ENCODE measurements at regions of chr18 and their contacts with region 1.

Region 1: GRCh38 chr18:9971313-9971920 is 57.6 kb downstream of the VAPA start:
- DNase-seq: peak; percentile 32
- ATAC-seq: peak; percentile 81
- H3K4me3 Mint-ChIP-seq: no peak overlapping the region
- H3K27ac Mint-ChIP-seq: no peak overlapping the region
- H3K4me1 Mint-ChIP-seq: peaks cover 14% of the 10 kb centered on the region
- H3K27me3 Mint-ChIP-seq: peaks cover 35% of the 10 kb centered on the region
- CTCF ChIP-seq: peak; percentile 36

Region 2: DNA sequence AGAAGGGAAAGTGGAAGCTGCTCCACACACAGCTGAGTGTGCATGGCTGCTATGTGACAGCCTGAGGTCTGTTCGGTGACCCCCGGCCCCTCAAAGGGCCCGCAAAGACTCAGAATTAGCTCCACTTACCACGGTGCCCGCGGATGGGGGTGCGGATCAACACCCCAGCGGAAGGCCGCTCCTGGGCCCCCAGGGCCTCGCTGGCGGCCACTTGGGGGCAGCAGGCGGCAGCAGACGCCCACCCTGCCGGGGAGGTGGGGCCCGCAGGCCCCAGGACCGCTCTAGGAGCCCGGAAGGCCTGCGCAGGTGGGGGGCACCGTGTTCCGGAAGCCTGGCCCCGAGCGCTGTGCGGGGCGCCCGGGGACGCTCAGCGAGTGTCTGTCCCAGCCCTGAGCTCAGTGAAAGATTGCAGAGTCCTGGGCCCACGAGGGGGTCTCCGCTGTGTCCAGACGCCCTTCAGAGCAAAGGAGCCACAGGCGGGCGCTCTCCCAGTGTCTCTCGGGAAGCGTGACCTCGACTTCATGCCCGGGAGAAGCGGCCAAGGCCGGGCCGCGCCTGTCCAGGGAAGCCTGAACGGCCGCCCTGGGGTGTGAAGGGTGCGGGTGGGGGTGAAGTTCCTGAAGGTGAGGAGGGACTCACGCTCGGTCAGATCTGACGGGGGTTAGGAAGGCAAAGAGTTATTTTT is 61.1 kb after region 1 on chr18:
- CTCF ChIA-PET with region 1: interaction called, 10 read pairs
- POLR2A ChIA-PET with region 1: no interaction called
- intact Hi-C with region 1: loop called (anchors 2 kb)
- DNase-seq: peak; percentile 52
- ATAC-seq: peak; percentile 94
- H3K4me3 Mint-ChIP-seq: peak overlapping the region; percentile 81
- H3K27ac Mint-ChIP-seq: peak overlapping the region; percentile 68
- H3K4me1 Mint-ChIP-seq: peaks cover 11% of the 10 kb centered on the region
- H3K27me3 Mint-ChIP-seq: no peaks in the 10 kb centered on the region
- CTCF ChIP-seq: no peak

Region 3: GRCh38 chr18:10519999-10520935 is 548.9 kb after region 1 on chr18:
- CTCF ChIA-PET with region 1: interaction called, 65 read pairs
- POLR2A ChIA-PET with region 1: no interaction called
- intact Hi-C with region 1: loop called (anchors 1 kb)
- DNase-seq: peak; percentile 37
- ATAC-seq: peak; percentile 94
- H3K4me3 Mint-ChIP-seq: no peak overlapping the region
- H3K27ac Mint-ChIP-seq: no peak overlapping the region
- H3K4me1 Mint-ChIP-seq: peaks cover 13% of the 10 kb centered on the region
- H3K27me3 Mint-ChIP-seq: peaks cover 12% of the 10 kb centered on the region
- CTCF ChIP-seq: no peak

Region 4: DNA sequence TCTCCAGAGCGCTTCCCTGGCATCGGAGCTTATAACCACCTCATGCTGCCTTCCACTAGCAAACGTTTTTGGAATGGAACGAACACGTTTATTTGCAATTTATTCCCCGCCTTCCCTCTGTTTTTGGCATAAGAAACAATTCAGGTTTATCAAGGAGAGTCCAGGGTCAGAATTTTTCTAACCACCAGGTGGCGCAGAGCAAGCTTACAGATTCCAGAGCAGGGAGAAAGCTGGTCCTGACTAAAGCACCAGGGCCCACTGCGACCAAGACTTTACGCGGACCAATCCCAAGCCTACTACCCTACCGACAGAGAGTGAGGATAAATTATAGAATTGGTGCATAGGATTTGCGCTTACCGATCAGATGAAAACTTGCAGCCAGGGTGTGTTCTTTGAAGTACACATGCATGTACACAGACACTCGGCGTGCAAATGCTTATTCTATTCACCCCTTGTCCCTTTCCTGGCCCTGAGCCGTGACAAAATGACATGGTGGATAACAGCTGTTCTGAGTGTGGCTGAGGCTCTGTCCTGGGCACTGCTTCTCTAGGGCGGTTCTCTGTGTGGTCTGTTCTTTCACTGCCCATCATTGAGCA is 589.1 kb after region 1 on chr18:
- CTCF ChIA-PET with region 1: interaction called, 3 read pairs
- POLR2A ChIA-PET with region 1: no interaction called
- intact Hi-C with region 1: loop called (anchors 1 kb)
- DNase-seq: peak; percentile 28
- ATAC-seq: peak; percentile 69
- H3K4me3 Mint-ChIP-seq: peak overlapping the region; percentile 67
- H3K27ac Mint-ChIP-seq: no peak overlapping the region
- H3K4me1 Mint-ChIP-seq: peaks cover 13% of the 10 kb centered on the region
- H3K27me3 Mint-ChIP-seq: no peaks in the 10 kb centered on the region
- CTCF ChIP-seq: peak; percentile 25

Region 5: DNA sequence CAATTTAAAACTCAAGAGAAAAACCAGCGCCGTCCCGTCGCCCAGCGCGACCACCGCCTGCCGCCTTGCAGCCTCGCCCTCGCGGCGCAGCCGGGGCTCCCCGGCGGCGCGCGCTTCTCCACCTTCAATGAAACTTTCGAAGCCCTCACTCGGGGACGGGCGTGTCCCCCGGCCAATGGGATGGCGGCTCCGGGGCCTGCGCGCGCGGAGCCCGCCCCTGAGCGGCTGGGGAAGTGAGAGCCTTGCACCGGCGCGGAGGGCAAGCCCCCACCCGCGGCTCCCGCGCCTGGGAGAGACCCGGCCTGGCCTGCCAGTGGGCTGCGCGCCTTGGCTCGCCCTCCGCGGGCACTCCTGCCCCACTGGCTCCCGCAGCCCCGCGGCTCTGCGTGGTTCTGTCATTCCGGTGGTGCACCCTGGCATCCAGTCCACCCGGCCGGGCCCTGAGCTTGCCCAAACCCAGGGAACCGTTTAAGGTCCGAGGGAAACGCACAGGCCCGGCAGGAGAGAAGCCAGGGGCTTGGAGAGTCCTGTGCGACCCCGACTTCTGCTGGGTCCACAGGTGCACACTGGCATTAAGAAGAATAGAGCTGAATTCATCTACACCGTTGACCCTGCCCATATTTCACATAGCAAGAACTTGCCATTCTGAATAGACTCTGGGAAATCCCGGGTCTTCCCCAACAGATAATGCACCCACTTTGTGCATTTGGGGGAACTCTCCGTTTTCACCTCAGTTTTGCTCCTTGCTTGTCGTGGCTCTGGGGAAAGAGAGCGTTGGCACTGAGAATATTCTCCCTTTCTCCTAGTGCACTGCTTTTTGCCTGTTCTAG is 1178.2 kb after region 1 on chr18 and contains the start of gene PIEZO2:
- CTCF ChIA-PET with region 1: no interaction called
- POLR2A ChIA-PET with region 1: no interaction called
- intact Hi-C with region 1: loop called (anchors 5 kb)
- DNase-seq: no peak
- ATAC-seq: no peak
- H3K4me3 Mint-ChIP-seq: no peak within 1 kb of the TSS
- H3K27ac Mint-ChIP-seq: no peak within 1 kb of the TSS
- H3K4me1 Mint-ChIP-seq: peaks cover 7% of the 10 kb centered on the region
- H3K27me3 Mint-ChIP-seq: peaks cover 33% of the 10 kb centered on the region
- CTCF ChIP-seq: no peak
- total RNA-seq, gene PIEZO2: not detected in 2 replicates

Measured in activated B cell treated with CpG ODN at 0.5 μM for 24 hours (primary cell).